ENCODE measurements at regions of chr6 and their contacts with region 1.

Region 1: GRCh38 chr6:18496462-18496861 is 109.3 kb downstream of the RNF144B start:
- DNase-seq: no peak
- H3K4me3 ChIP-seq: no peak overlapping the region
- H3K4me3 Mint-ChIP-seq: no peak overlapping the region
- H3K27ac ChIP-seq: no peak overlapping the region
- H3K27ac Mint-ChIP-seq: no peak overlapping the region
- H3K4me1 ChIP-seq: no peaks in the 10 kb centered on the region
- H3K4me1 Mint-ChIP-seq: no peaks in the 10 kb centered on the region
- H3K27me3 ChIP-seq: no peaks in the 10 kb centered on the region
- H3K27me3 Mint-ChIP-seq: peaks cover 0 to 6% of the 10 kb centered on the region in 2 donors

Region 2: GRCh38 chr6:18469536-18469935 is 26.9 kb before region 1 on chr6:
- CTCF ChIA-PET with region 1: no interaction called
- POLR2A ChIA-PET with region 1: no interaction called
- intact Hi-C with region 1: loop called (anchors 1 kb)
- DNase-seq: no peak
- H3K4me3 ChIP-seq: no peak overlapping the region
- H3K4me3 Mint-ChIP-seq: no peak overlapping the region
- H3K27ac ChIP-seq: no peak overlapping the region
- H3K27ac Mint-ChIP-seq: no peak overlapping the region
- H3K4me1 ChIP-seq: no peaks in the 10 kb centered on the region
- H3K4me1 Mint-ChIP-seq: no peaks in the 10 kb centered on the region
- H3K27me3 ChIP-seq: no peaks in the 10 kb centered on the region
- H3K27me3 Mint-ChIP-seq: peaks cover 2 to 4% of the 10 kb centered on the region in 2 donors

Measured in CD4-positive, alpha-beta memory T cell (primary cell).